ENCODE measurements at regions of chr12 and their contacts with region 1.

Region 1: GRCh38 chr12:94305130-94305957 is 154.3 kb downstream of the CEP83 start:
- DNase-seq: peak; percentile 69
- H3K4me3 Mint-ChIP-seq: peak overlapping the region; percentile 31
- H3K27ac Mint-ChIP-seq: peak overlapping the region; percentile 80
- H3K4me1 Mint-ChIP-seq: peaks cover 59% of the 10 kb centered on the region
- H3K27me3 Mint-ChIP-seq: no peaks in the 10 kb centered on the region

Region 2: DNA sequence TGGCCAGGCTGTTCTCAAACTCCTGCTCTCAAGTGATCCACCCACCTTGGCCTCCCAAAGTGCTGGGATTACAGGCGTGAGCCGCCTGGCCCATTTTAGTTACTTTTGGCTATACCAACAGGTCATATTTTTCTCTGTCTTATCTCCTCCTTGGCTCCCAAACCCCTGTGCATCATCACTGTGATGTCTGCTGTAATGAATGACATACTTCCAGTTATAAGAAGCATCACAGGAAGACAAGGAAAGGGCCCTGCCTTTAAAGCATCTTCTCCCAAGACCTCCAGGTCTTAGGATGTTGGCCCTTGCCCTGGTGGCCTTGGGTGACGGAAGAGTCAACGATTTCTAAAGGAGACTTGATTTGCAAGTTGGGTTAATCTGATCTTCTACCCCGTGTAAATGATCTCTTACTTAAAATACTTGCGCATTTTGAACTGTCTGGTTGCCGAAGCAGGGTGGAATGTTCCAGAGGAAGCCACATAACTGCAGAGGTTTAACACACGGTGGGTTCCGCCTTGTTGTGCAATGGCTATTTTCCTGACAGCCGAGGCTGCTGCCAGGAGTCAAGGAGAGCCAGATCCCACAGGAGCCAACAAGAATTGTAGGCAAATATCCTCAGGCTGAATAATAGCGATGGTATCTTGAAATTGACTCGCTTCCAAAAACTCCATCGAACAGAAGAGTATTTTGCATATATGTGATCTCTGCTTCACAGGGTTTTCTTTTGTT is 212.7 kb before region 1 on chr12:
- intact Hi-C with region 1: no loop called
- DNase-seq: no peak
- H3K4me3 Mint-ChIP-seq: no peak overlapping the region
- H3K27ac Mint-ChIP-seq: no peak overlapping the region
- H3K4me1 Mint-ChIP-seq: no peaks in the 10 kb centered on the region
- H3K27me3 Mint-ChIP-seq: peaks cover 5% of the 10 kb centered on the region

Region 3: DNA sequence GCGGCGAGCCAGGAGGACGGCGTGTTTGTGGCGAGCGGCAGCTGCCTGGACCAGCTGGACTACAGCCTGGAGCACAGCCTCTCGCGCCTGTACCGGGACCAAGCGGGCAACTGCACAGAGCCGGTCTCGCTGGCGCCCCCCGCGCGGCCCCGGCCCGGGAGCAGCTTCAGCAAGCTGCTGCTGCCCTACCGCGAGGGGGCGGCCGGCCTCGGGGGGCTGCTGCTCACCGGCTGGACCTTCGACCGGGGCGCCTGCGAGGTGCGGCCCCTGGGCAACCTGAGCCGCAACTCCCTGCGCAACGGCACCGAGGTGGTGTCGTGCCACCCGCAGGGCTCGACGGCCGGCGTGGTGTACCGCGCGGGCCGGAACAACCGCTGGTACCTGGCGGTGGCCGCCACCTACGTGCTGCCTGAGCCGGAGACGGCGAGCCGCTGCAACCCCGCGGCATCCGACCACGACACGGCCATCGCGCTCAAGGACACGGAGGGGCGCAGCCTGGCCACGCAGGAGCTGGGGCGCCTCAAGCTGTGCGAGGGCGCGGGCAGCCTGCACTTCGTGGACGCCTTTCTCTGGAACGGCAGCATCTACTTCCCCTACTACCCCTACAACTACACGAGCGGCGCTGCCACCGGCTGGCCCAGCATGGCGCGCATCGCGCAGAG is 156.1 kb before region 1 on chr12:
- intact Hi-C with region 1: loop called (anchors 1 kb)
- DNase-seq: peak; percentile 40
- H3K4me3 Mint-ChIP-seq: peak overlapping the region; percentile 87
- H3K27ac Mint-ChIP-seq: peak overlapping the region; percentile 47
- H3K4me1 Mint-ChIP-seq: peaks cover 30% of the 10 kb centered on the region
- H3K27me3 Mint-ChIP-seq: peaks cover 47% of the 10 kb centered on the region

Region 4: DNA sequence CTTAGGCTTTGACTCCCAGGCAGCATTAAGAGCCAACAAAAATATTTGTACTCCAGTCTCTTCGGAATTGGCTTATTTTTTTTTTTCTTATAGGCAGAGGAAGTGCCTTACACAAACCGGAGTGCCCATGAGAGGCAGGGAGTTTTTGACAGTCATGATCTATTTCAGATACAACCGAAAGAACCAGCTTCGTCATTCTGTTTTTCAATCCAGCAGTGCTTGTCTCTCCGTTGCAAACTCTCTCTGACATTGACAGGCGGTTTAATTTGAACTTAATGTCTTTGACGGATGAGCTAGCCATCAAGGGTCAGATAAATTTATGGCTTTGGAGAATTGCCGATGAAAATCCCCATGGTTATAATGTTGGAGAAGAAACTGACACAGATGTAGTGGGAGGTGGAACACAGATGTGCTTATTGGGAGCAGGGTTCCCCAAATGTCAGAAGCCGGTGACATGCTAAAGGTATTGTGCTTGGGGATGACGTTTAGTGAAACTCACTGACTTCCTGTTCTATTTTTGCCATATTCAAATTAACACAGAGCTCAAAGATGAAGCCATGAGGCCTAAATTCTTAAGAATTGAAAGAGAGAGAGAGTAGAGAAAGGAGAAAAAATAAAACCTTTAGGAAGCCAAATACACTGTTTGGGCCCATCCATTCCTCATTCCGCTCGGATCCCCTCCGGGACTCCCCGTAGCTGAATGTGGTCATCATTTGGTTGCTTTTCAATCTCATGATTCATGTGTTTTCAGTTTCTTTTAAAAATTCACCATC is 97.3 kb before region 1 on chr12:
- intact Hi-C with region 1: loop called (anchors 1 kb)
- DNase-seq: peak; percentile 33
- H3K4me3 Mint-ChIP-seq: peak overlapping the region; percentile 77
- H3K27ac Mint-ChIP-seq: peak overlapping the region; percentile 98
- H3K4me1 Mint-ChIP-seq: peaks cover 55% of the 10 kb centered on the region
- H3K27me3 Mint-ChIP-seq: no peaks in the 10 kb centered on the region

Region 5: DNA sequence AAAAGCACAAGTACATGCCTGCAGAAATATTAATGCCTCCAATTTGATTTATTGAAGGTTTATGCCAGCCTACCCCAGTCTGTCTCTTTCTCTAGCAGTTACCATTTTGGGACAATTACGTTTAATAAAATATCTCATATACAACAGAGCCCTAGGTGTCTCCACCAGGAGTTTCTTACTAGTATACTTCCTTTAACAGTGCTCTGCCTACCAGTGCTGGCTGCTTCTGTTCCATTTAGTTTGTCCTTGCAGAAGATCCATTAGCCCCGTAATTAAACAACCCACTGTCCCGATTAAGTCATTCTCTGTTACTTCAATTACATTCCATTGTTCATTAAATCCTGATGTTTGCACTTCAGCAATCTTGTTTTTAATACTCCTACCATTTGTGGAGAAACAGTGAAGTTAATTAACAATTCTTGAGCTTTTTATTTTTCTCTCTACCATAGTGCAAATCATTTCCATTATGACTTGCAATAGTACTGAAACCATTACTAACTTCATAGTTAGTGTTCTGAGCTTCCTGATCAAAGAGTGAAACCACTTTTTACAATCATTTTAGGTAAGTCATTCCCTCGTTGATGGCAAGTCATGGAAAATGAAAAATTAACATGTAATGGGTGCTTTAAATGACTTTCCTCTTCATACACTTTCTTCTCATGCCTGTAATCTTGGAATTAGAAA is 35.9 kb before region 1 on chr12:
- intact Hi-C with region 1: loop called (anchors 1 kb)
- DNase-seq: no peak
- H3K4me3 Mint-ChIP-seq: no peak overlapping the region
- H3K27ac Mint-ChIP-seq: no peak overlapping the region
- H3K4me1 Mint-ChIP-seq: peaks cover 47% of the 10 kb centered on the region
- H3K27me3 Mint-ChIP-seq: no peaks in the 10 kb centered on the region

Region 6: DNA sequence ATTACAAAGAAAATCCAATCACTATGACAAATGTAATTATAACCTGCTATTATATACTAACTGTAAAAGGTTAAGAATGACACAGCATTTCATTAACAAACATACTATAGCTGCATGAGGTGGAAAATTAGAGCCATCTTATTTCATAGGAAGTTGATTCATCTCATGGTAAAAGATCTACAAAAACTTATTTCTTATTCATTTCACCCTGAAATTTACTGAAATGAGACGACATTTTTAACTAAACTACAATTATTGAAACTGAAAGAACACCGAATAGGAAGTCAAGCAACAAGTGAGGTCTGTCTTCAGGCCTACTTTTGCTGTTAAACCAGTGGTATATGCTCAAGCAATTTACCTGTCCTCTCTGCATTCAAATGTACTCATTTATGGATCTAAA is 67.1 kb after region 1 on chr12:
- intact Hi-C with region 1: loop called (anchors 1 kb)
- DNase-seq: no peak
- H3K4me3 Mint-ChIP-seq: peak overlapping the region; percentile 13
- H3K27ac Mint-ChIP-seq: peak overlapping the region; percentile 74
- H3K4me1 Mint-ChIP-seq: peaks cover 41% of the 10 kb centered on the region
- H3K27me3 Mint-ChIP-seq: no peaks in the 10 kb centered on the region

Region 7: DNA sequence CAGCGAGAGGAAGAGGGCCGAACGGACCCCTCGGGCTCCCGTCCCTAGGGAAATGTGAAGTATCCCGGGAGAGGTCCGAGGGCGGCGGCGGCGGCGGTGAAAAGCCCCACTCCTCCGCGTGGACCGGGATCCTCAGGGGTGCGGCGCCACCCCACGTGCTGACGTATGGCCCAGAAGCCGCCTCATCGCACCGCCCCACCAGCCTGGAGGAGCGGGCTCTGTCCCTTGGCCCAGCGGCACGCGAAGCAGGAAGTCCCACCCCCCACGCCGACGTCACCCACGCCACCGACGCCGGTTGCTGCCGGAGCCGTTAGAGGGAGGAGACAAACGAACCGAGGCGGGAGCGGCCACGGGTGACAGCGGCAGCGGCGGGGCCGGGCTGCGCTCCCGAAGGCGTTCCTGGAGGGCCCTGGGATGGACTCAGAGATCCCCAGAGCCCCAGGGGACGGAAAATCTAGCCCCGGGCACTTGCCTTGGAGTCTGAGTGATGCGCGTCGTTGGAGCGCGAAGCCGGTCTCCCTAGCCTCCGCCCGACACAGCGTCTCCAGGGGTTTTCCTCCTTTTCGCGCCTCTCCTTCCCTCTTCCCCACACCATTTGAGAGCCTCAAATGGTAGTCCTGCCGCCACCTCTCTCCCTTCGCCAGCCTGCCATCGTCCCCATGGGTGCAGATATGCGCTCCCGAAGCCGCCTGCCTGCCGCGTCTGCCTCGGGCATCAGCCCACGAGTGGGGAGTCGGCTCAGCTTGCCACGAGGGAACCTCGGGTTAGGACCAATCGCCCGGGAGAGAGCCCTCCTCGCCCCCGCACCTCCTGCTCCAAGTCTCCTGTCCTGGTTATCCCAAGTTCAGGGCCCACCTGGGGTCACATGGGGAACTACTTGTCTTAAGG is 154.6 kb after region 1 on chr12 and contains the start of gene CEP83:
- intact Hi-C with region 1: loop called (anchors 1 kb)
- DNase-seq: peak; percentile 95
- H3K4me3 Mint-ChIP-seq: peak within 1 kb of the TSS; percentile 88
- H3K27ac Mint-ChIP-seq: peak within 1 kb of the TSS; percentile 92
- H3K4me1 Mint-ChIP-seq: peaks cover 27% of the 10 kb centered on the region
- H3K27me3 Mint-ChIP-seq: peaks cover 5% of the 10 kb centered on the region
- total RNA-seq, gene CEP83: 32.4 and 35.9 TPM in 2 replicates